ENCODE measurements at regions of chr19 and their contacts with region 1.

Region 1: DNA sequence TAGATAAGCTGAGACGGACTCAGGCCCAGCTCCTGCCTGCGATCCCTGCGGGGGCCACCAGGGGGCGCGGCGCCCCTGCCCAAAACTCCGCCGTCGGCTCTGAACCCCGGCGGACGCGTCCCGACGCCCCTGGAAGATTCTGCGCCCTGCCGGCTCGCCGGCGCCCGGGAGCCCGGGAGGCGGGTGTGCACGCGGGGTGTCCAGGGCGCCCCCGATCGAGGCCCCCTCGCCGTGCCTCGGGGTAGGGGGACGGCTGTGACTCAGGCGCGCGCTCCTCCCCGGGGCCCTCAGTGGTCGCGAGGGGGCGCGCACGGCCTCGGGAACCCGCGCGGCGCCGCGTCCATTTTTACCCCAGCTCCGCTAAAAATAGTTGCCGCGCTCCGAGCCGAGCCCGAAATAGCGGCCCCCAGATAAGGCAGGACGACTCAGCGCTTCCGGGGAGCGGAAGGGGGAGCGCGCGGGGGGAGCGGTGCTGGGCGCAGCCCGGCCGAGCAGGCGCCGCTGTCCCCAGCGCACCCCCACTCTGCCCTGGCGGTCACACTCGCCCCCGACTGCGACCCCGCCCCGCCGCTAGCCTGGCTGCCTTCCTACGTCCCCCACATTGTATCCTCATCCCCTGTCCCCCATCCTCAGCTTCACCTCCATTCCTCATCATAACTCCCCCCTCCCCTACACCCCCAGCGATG is 16.0 kb upstream of the ERCC1 start:
- DNase-seq: peak; percentile 73
- H3K4me3 Mint-ChIP-seq: peak overlapping the region; percentile 77
- H3K27ac Mint-ChIP-seq: peak overlapping the region; percentile 71
- H3K4me1 Mint-ChIP-seq: peaks cover 34% of the 10 kb centered on the region
- H3K27me3 Mint-ChIP-seq: peaks cover 3% of the 10 kb centered on the region

Region 2: GRCh38 chr19:45423589-45424190 is 16.0 kb before region 1 on chr19 and contains the start of gene ERCC1:
- intact Hi-C with region 1: loop called (anchors 1 kb)
- DNase-seq: peak; percentile 82
- H3K4me3 Mint-ChIP-seq: peak within 1 kb of the TSS; percentile 97
- H3K27ac Mint-ChIP-seq: peak within 1 kb of the TSS; percentile 95
- H3K4me1 Mint-ChIP-seq: peaks cover 50% of the 10 kb centered on the region
- H3K27me3 Mint-ChIP-seq: peaks cover 9% of the 10 kb centered on the region
- total RNA-seq, gene ERCC1: 143 and 152 TPM in 2 replicates

Region 3: DNA sequence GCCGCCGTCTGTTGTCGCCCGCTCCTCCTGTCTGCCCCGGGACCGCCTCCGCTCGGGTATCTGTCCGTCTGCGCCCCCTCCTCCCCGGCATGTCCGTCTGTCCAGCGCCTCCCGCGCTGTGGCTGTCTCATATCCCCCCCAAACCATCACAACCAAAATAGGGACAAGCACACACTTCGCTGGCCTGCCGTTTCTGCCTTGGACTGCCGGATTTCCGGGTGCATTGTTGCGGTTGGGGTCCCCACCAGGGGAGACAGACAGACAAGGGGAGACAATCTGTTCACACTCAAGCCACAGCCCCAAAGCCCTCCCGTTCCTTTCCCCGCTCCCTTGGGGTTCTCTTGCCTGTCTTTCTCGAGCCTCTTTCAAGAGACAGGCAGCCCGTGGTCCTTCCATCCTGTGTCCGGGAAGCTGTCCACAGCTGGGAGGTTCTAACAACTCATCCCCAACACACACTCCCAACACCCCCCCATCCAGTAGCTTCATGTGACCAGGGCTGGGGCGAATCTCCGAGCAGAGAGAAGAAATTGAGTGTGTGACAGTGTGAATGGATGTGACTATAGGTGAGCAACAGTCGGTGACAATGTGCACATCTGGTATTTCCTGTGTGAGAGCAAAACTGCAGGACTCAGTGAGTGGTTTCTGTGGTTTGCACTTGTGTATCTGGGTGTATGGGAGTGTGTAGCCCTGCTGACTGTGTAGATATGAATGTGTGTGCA is 11.6 kb after region 1 on chr19:
- intact Hi-C with region 1: loop called (anchors 1 kb)
- DNase-seq: peak; percentile 58
- H3K4me3 Mint-ChIP-seq: peak overlapping the region; percentile 75
- H3K27ac Mint-ChIP-seq: peak overlapping the region; percentile 92
- H3K4me1 Mint-ChIP-seq: peaks cover 38% of the 10 kb centered on the region
- H3K27me3 Mint-ChIP-seq: peaks cover 17% of the 10 kb centered on the region

Region 4: DNA sequence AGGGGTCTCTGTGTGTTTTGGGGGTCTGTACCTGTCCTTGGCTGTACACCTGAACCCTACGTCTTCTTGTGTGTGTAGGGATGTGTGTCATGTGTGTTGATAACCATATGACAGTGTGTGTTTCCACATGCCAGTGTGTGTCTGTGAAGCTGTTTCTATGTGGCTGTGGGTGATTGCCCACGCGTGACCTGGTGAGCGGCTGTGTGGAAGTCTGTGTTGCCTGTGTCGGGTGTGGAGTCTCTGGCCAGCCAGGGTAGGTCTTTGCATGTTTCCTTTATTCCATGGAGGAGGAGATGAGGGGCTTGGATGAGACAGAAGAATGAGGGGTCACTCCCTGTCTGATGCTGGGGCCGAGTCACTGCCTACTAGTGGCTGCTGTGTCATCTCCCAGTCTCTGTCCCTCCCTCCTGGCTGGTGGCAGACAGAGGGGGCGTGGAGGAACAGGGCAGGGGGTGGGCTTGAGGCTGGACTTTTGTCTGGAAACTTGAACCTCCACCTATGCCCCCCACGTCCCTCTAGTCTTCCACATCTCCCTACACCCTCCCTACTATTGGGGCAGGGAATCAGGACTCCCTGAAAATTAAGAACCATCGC is 25.2 kb after region 1 on chr19:
- intact Hi-C with region 1: no loop called
- DNase-seq: no peak
- H3K4me3 Mint-ChIP-seq: no peak overlapping the region
- H3K27ac Mint-ChIP-seq: no peak overlapping the region
- H3K4me1 Mint-ChIP-seq: peaks cover 18% of the 10 kb centered on the region
- H3K27me3 Mint-ChIP-seq: peaks cover 9% of the 10 kb centered on the region

Measured in activated T-helper 1 cell treated with anti-CD3 and anti-CD28 coated beads, Interleukin-12 subunit alpha, Interleukin-12 subunit beta, Interleukin-2, Interleukin-4 antibody, amounts not matched to agents 30 ng/mL and 10 ng/mL and 1 ng/mL, durations not matched to agents 14 hours and 24 hours and 36 hours (primary cell).